GM13977 (cell line): ENCODE measurements at regions of chr5 and their contacts with region 1.

Region 1: GRCh38 chr5:159156426-159157238 is 52.7 kb downstream of the RNF145 start:
- DNase-seq: peak; percentile 69
- CTCF ChIP-seq: peak; percentile 83

Region 2: GRCh38 chr5:159316519-159317383 is 160.1 kb after region 1 on chr5:
- in situ Hi-C with region 1: loop called (anchors 10 kb)
- DNase-seq: peak; percentile 60
- CTCF ChIP-seq: peak; percentile 81

Region 3: GRCh38 chr5:159444441-159445082 is 287.9 kb after region 1 on chr5:
- in situ Hi-C with region 1: loop called (anchors 25 kb)
- DNase-seq: peak; percentile 60
- CTCF ChIP-seq: peak; percentile 55

Region 4: GRCh38 chr5:159987031-159987674 is 830.5 kb after region 1 on chr5:
- in situ Hi-C with region 1: loop called (anchors 25 kb)
- DNase-seq: peak; percentile 88
- CTCF ChIP-seq: peak; percentile 91